Psoas muscle (tissue), 8 donors: ENCODE measurements at regions of chr14 and their contacts with region 1.

Region 1: GRCh38 chr14:77862154-77862786 is 62.4 kb downstream of the ADCK1 start:
- DNase-seq: peak; percentile 68 to 83
- ATAC-seq: peak; percentile 74 to 80 (median 76)
- H3K4me3 ChIP-seq: no peak overlapping the region
- H3K27ac ChIP-seq: no peak overlapping the region
- H3K4me1 ChIP-seq: no peaks in the 10 kb centered on the region
- H3K27me3 ChIP-seq: no peaks in the 10 kb centered on the region
- CTCF ChIP-seq: peak; percentile 95

Region 2: DNA sequence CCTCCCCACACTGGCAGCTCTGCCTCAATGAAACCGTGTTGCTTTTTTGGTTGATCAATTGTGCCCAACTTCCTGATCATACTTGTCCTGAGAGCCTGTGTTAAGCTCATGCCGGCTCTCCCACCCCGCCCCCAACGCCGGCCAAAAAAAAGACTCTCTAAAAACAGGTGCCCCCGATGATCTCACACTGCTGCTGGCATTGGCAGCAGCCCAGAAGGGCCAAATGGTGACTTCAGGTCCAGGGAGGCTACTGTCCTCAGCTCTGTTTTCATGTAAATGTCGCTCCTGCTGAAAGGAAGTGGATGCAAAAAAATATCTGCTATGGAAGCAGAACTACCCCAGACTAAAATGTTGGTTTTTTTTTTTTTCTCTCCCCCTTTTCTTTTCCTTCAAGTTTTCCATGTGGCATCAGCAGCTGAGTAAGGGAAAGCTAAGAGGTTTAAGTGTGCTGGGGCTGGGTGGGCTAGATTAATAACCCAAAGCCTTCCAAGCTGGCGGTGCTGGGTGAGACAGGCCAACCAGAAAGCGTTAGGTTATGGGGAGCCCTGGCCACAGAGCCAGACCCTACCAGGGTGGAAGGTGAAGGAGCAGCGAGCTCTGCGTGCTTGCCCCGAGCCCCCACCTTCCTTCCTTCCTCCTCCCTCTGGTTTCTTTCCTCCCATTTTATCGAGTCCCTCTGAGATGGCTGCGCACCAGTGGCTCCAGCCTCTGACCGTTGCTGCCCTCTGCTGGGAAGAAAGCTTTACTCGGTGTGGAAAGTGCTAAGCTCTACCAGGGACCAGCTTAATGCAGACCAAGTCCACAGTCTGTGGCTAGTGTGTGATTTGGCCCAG is 704.0 kb after region 1 on chr14:
- intact Hi-C with region 1: loop called in 1 of 2 experiments (anchors 5 kb)
- DNase-seq: peak; percentile 67 to 82
- ATAC-seq: peak; percentile 92 to 99 (median 98)
- H3K4me3 ChIP-seq: peak overlapping the region; percentile 61
- H3K27ac ChIP-seq: peak overlapping the region; percentile 73
- H3K4me1 ChIP-seq: no peaks in the 10 kb centered on the region
- H3K27me3 ChIP-seq: no peaks in the 10 kb centered on the region
- CTCF ChIP-seq: peak; percentile 75

Region 3: GRCh38 chr14:78598041-78598920 is 736.0 kb after region 1 on chr14:
- intact Hi-C with region 1: loop called (anchors 5 kb)
- DNase-seq: peak; percentile 27 to 54
- ATAC-seq: peak; percentile 71 to 89 (median 86)
- H3K4me3 ChIP-seq: no peak overlapping the region
- H3K27ac ChIP-seq: no peak overlapping the region
- H3K4me1 ChIP-seq: no peaks in the 10 kb centered on the region
- H3K27me3 ChIP-seq: no peaks in the 10 kb centered on the region
- CTCF ChIP-seq: peak; percentile 82

Region 4: GRCh38 chr14:78697341-78697740 is 835.1 kb after region 1 on chr14:
- intact Hi-C with region 1: loop called in 1 of 2 experiments (anchors 10 kb)
- DNase-seq: no peak
- ATAC-seq: no peak
- H3K4me3 ChIP-seq: no peak overlapping the region
- H3K27ac ChIP-seq: no peak overlapping the region
- H3K4me1 ChIP-seq: no peaks in the 10 kb centered on the region
- H3K27me3 ChIP-seq: no peaks in the 10 kb centered on the region
- CTCF ChIP-seq: peak; percentile 48